ENCODE measurements at regions of chr12 and their contacts with region 1.

Region 1: DNA sequence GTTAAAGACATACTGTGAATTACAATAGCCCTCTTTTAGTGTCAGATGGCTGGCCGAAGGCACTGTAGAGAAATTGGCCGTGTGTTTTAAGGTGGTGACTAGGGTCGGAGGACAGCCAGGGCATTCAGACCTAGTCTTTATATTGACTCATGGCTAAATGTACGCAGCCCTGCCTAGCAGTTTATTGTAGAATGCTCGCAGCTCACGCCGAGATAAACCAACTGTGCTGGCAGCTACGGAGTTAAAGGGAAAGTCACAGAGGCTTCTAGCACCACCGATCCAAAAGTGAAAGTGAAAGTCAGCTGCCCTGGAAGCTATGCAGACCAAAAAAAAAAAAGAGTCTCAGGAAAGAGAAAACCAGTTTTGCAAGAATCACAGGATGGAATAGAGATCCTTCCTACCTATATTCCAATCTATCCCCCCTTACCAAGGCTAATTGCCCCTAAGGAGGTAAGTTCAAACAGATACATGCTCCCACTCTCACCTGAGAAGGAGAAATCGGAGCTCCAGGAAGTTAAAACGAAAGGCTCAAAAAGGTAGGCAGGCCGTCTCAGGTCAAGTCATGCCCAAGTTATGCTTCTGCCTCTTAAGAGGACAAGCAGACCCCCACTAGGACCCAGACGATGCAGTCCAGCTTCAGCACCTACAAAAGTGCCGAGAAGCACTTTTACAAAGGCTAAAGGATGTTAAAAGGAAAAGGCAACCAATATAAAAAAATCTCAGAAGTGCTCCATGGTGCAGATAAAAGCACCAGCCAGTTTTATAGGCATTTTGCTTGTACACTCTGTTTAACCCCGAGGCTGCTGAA is 24.8 kb downstream of the KLRK1 start:
- DNase-seq: peak in 1 of 2 donors; percentile 73
- H3K4me3 ChIP-seq: peak overlapping the region; percentile 77 to 87
- H3K27ac ChIP-seq: peak overlapping the region; percentile 88 to 90
- H3K4me1 ChIP-seq: peaks cover 10% of the 10 kb centered on the region in 2 donors
- H3K27me3 ChIP-seq: no peaks in the 10 kb centered on the region
- CTCF ChIP-seq: no peak

Region 2: GRCh38 chr12:10153271-10154144 is 211.5 kb before region 1 on chr12:
- intact Hi-C with region 1: loop called (anchors 10 kb)
- DNase-seq: peak in 1 of 2 donors; percentile 84
- H3K4me3 ChIP-seq: peak overlapping the region; percentile 65 to 79
- H3K27ac ChIP-seq: peak overlapping the region; percentile 75 to 77
- H3K4me1 ChIP-seq: peaks cover 0 to 3% of the 10 kb centered on the region in 2 donors
- H3K27me3 ChIP-seq: no peaks in the 10 kb centered on the region
- CTCF ChIP-seq: peak; percentile 66 to 78 (median 76)

Region 3: GRCh38 chr12:10613349-10614055 is 248.5 kb after region 1 on chr12 and contains the start of gene MAGOHB:
- intact Hi-C with region 1: loop called (anchors 1 kb)
- DNase-seq: peak; percentile 82 to 98
- H3K4me3 ChIP-seq: peak within 1 kb of the TSS; percentile 86 to 99
- H3K27ac ChIP-seq: peak within 1 kb of the TSS; percentile 87 to 94
- H3K4me1 ChIP-seq: peaks cover 0 to 6% of the 10 kb centered on the region in 2 donors
- H3K27me3 ChIP-seq: no peaks in the 10 kb centered on the region
- CTCF ChIP-seq: no peak
- total RNA-seq, gene MAGOHB: 5.4 TPM

Region 4: GRCh38 chr12:11171145-11171968 is 806.3 kb after region 1 on chr12 and contains the start of gene SMIM10L1:
- intact Hi-C with region 1: loop called (anchors 10 kb)
- DNase-seq: peak; percentile 66 to 97
- H3K4me3 ChIP-seq: peak within 1 kb of the TSS; percentile 58 to 90
- H3K27ac ChIP-seq: peak within 1 kb of the TSS; percentile 94 to 99
- H3K4me1 ChIP-seq: peaks cover 3 to 18% of the 10 kb centered on the region in 2 donors
- H3K27me3 ChIP-seq: no peaks in the 10 kb centered on the region
- CTCF ChIP-seq: no peak
- total RNA-seq, gene SMIM10L1: 8.0 TPM